Activated T-helper 2 cell treated with anti-CD3 and anti-CD28 coated beads, Interferon-gamma antibody, Interleukin-2, Interleukin-4, amounts not matched to agents 10 μg/mL and 5 μg/mL and 100 μg/mL, durations not matched to agents 14 hours and 24 hours and 36 hours (primary cell): ENCODE measurements at regions of chr18 and their contacts with region 1.

Region 1: GRCh38 chr18:75070625-75071483 is 138.1 kb downstream of the PTGR3 start:
- DNase-seq: peak; percentile 65
- H3K4me3 Mint-ChIP-seq: peak overlapping the region; percentile 79
- H3K27ac Mint-ChIP-seq: peak overlapping the region; percentile 95
- H3K4me1 Mint-ChIP-seq: peaks cover 19% of the 10 kb centered on the region
- H3K27me3 Mint-ChIP-seq: no peaks in the 10 kb centered on the region

Region 2: GRCh38 chr18:74597662-74598349 is 473.0 kb before region 1 on chr18 and contains the start of gene ZNF407:
- intact Hi-C with region 1: loop called (anchors 2 kb)
- DNase-seq: peak; percentile 85
- H3K4me3 Mint-ChIP-seq: peak within 1 kb of the TSS; percentile 96
- H3K27ac Mint-ChIP-seq: peak within 1 kb of the TSS; percentile 98
- H3K4me1 Mint-ChIP-seq: peaks cover 44% of the 10 kb centered on the region
- H3K27me3 Mint-ChIP-seq: no peaks in the 10 kb centered on the region
- total RNA-seq, gene ZNF407: 18.3 TPM in 2 replicates

Region 3: GRCh38 chr18:74942319-74942910 is 128.4 kb before region 1 on chr18:
- intact Hi-C with region 1: loop called (anchors 2 kb)
- DNase-seq: no peak
- H3K4me3 Mint-ChIP-seq: no peak overlapping the region
- H3K27ac Mint-ChIP-seq: peak overlapping the region; percentile 37
- H3K4me1 Mint-ChIP-seq: peaks cover 13% of the 10 kb centered on the region
- H3K27me3 Mint-ChIP-seq: peaks cover 3% of the 10 kb centered on the region

Region 4: DNA sequence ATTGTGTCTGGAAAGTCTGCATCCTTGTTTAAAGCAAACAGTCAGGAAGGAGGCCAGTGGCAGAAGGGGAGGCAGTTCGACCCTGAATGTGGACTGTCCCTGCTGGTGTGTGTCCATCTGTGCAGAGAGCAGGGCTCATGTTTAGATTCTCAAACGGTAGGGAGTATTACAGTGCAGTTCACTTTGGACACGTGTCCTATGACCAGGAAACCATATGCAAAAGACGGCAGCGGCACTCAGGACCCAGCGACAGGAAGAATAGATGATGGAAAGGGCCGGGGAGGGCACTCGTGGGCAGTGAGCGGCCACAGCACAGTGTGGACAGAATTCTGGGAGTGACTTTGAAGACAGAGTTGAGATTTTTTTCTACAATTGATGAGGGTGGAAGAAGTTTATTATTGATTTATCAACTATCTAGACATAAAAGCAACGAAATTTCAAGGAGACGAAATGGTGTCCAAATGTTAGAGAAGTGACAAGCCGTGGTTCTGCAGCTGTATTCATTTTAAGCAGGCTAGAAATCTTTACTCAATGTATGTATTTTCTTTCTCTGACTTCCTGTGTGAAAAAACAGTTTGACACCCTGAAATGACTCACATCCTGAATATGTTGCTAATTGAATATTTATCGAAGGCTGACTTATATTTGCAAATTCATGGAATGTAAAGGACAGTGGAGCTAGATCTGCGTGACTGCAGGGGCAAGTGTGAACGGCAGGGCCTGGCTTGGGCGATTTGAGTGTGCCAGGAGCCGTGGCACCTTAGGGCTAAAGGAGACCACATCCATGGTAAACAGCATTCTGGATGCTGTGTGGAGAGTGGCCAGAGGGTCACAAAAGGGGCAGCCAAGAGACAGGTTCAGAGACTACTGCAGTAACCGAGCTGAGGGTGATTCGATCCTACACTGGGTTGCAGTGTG is 76.1 kb before region 1 on chr18:
- intact Hi-C with region 1: loop called (anchors 2 kb)
- DNase-seq: no peak
- H3K4me3 Mint-ChIP-seq: peak overlapping the region; percentile 51
- H3K27ac Mint-ChIP-seq: peak overlapping the region; percentile 67
- H3K4me1 Mint-ChIP-seq: peaks cover 52% of the 10 kb centered on the region
- H3K27me3 Mint-ChIP-seq: no peaks in the 10 kb centered on the region

Region 5: GRCh38 chr18:75489493-75490190 is 418.8 kb after region 1 on chr18:
- intact Hi-C with region 1: no loop called
- DNase-seq: no peak
- H3K4me3 Mint-ChIP-seq: no peak overlapping the region
- H3K27ac Mint-ChIP-seq: no peak overlapping the region
- H3K4me1 Mint-ChIP-seq: no peaks in the 10 kb centered on the region
- H3K27me3 Mint-ChIP-seq: peaks cover 4% of the 10 kb centered on the region